Naive thymus-derived CD4-positive, alpha-beta T cell (primary cell): ENCODE measurements at regions of chr6 and their contacts with region 1.

Region 1: DNA sequence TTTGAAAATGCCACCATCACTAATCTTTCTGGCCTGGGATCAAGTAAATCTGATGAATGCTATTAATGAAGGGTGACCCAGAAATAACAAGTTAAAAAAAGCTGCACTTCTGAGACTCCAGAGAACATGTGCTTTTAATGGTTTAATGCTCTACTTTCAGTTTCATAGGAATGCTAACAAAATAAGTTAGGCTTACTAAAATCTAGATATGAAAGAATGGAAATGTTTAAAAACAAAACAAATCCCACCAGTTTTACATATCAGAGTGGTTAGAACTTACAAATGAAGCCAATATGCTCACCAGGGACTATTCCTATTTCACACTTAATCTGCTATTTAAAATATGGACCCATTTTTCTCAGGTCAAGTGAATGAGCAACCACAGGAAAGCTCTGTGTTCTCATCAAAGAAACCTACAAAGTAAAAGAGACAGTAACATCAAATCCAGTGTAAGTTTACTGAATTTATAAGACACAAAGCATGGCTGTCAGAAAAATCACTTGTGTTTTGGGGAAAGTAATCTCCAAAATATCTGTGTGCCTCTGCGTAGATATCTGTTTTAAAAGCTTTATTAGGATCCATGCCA is 40.3 kb downstream of the FYN start:
- DNase-seq: no peak
- ATAC-seq: no peak
- H3K4me3 ChIP-seq: peak overlapping the region; percentile 34
- H3K4me3 Mint-ChIP-seq: peak overlapping the region; percentile 1 to 80 (median 61)
- H3K27ac ChIP-seq: peak overlapping the region; percentile 24
- H3K27ac Mint-ChIP-seq: peak overlapping the region in 7 of 9 donors; percentile 46 to 91 (median 85)
- H3K4me1 ChIP-seq: peaks cover 39 to 59% of the 10 kb centered on the region in 2 donors
- H3K4me1 Mint-ChIP-seq: peaks cover 54 to 85% (median 82%) of the 10 kb centered on the region in 7 donors
- H3K27me3 ChIP-seq: no peaks in the 10 kb centered on the region
- H3K27me3 Mint-ChIP-seq: no peaks in the 10 kb centered on the region

Region 2: DNA sequence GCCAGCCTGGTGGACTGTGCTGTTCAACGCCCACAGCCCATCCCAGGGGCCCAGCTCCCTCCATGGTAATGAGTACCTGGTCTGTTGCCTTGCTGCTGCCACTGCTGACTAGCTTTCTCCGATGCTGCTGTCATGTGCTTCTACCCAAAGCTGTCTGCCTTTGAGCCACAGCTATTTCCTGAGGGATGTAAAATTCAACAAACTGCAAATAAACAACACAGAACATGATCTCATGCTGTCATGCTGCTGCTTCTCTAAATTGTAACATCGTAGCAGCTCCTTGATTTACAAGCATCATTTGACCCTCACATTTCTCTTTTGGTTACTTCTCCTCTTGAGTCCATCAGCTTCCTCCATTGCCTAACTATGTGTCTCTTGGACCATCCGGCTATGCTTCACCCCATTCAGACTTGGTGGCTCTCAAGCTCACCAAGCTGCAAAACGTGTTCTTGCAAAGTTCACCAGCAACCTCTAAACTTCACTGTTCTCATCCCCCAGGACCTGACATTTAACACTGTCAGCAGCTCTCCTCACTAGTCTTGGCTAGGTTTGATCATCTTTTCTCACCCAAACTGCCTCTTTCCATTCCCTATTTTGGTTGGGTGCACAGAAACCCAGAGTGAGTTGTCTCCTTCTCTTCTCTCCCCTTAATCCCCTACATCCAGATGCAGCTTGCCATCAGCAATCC is 14.2 kb before region 1 on chr6:
- CTCF ChIA-PET with region 1: no interaction called
- POLR2A ChIA-PET with region 1: interaction called, 4 read pairs
- intact Hi-C with region 1: loop called (anchors 2 kb)
- DNase-seq: no peak
- ATAC-seq: peak; percentile 44
- H3K4me3 ChIP-seq: no peak overlapping the region
- H3K4me3 Mint-ChIP-seq: peak overlapping the region; percentile 23 to 77 (median 50)
- H3K27ac ChIP-seq: peak overlapping the region; percentile 19
- H3K27ac Mint-ChIP-seq: peak overlapping the region; percentile 48 to 90 (median 75)
- H3K4me1 ChIP-seq: peaks cover 35 to 45% of the 10 kb centered on the region in 2 donors
- H3K4me1 Mint-ChIP-seq: peaks cover 36 to 85% (median 79%) of the 10 kb centered on the region in 7 donors
- H3K27me3 ChIP-seq: no peaks in the 10 kb centered on the region
- H3K27me3 Mint-ChIP-seq: no peaks in the 10 kb centered on the region

Region 3: GRCh38 chr6:112203577-112204349 is 370.8 kb after region 1 on chr6:
- CTCF ChIA-PET with region 1: no interaction called
- POLR2A ChIA-PET with region 1: no interaction called
- intact Hi-C with region 1: no loop called
- DNase-seq: no peak
- ATAC-seq: no peak
- H3K4me3 ChIP-seq: no peak overlapping the region
- H3K4me3 Mint-ChIP-seq: peak overlapping the region in 1 of 10 donors; percentile 67
- H3K27ac ChIP-seq: no peak overlapping the region
- H3K27ac Mint-ChIP-seq: peak overlapping the region in 1 of 9 donors; percentile 59
- H3K4me1 ChIP-seq: no peaks in the 10 kb centered on the region
- H3K4me1 Mint-ChIP-seq: peaks cover 0 to 8% (median 0%) of the 10 kb centered on the region in 7 donors
- H3K27me3 ChIP-seq: no peaks in the 10 kb centered on the region
- H3K27me3 Mint-ChIP-seq: peaks cover 20 to 46% (median 31%) of the 10 kb centered on the region in 5 donors